ENCODE measurements at regions of chr10 and their contacts with region 1.

Region 1: GRCh38 chr10:106711313-106711906 is 453.1 kb downstream of the SORCS1 start:
- DNase-seq: peak; percentile 46
- H3K4me3 ChIP-seq: no peak overlapping the region
- H3K27ac ChIP-seq: peak overlapping the region in 1 of 2 experiments; percentile 34; a peak in 1 of 4 replicates
- H3K4me1 ChIP-seq: peaks cover 0 to 23% of the 10 kb centered on the region in 2 experiments; a peak in 2 of 4 replicates
- H3K27me3 ChIP-seq: no peaks in the 10 kb centered on the region
- CTCF ChIP-seq: peak; percentile 72
- EP300 ChIP-seq: no peak
- RAD21 ChIP-seq: peak; percentile 73

Region 2: DNA sequence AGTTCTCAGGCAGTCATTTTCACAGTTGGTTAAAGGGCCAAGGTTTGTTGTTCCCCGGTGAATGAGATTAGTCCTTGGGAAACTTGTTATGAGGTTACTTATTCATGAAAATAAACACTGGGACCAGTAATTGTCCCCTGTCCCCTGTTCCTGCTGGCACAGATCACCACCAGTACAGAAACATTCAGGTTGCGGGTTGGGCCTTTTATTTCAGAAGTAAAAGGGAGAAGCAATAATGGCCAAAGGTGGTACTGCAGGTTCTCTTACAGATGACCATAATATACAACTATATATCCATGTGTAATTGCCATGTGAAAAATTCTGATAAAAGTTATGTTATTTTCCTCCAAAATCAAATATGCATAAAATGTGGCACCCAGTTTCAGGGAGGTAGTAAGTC is 11.1 kb after region 1 on chr10:
- CTCF ChIA-PET with region 1: interaction called, 10 read pairs
- POLR2A ChIA-PET with region 1: no interaction called
- DNase-seq: no peak
- H3K4me3 ChIP-seq: no peak overlapping the region
- H3K27ac ChIP-seq: no peak overlapping the region
- H3K4me1 ChIP-seq: peaks cover 0 to 3% of the 10 kb centered on the region in 2 experiments; a peak in 1 of 4 replicates
- H3K27me3 ChIP-seq: no peaks in the 10 kb centered on the region
- CTCF ChIP-seq: no peak; the same call in 1 of the 2 replicates
- EP300 ChIP-seq: no peak
- RAD21 ChIP-seq: no peak

Region 3: DNA sequence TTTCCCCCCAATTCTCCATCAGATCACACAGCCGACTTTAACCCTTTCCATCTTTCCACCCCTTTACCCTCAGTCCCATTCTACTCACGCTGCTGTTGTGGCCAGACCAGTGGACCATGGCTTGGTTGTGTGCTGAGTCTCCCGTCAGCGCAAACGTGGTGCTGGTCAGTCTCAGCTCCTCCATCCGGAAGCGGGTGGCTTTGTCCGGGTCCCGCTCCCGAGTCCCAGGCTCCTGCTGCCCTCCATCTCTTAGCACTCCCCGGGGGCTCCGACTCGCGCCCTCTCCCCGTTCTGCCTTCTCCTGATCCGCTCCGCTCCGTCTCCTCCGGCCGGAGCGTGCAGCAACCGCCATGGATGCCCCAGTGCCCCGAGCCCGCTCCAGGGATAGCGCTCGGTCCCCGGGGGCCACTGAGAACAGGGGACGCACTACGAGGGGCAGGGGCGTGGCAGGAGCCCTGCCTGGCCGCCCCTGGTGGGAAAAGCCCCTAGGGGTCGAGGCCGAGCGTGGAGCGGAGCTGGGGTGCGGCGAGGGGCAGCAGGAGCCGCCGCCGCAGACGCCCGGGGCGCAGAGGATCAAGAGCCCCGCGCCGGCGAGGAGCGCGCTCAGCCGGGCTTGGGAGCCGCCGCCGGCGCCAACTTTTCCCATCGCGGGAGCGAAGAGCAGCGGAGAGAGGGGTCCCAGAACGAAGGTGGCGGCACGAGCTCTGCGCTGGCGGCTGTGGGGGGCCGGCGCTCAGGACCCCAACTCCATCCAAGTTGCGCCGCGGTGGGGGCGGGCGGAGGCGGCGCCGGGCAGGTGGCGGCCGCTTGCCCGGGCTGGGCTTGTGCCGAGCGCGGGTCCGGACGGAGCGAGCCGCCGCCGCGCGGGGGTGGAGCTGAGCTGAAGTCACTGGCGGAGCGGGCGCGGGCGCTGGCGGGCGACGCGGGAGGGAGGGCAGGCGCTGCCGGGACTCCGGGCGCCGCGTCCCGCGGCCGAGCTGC is 452.8 kb after region 1 on chr10 and contains the start of gene SORCS1:
- CTCF ChIA-PET with region 1: interaction called, 13 read pairs
- POLR2A ChIA-PET with region 1: interaction called, 11 read pairs
- DNase-seq: peak; percentile 88
- H3K4me3 ChIP-seq: peak within 1 kb of the TSS; percentile 9 to 61; a peak in 3 of 4 replicates
- H3K27ac ChIP-seq: peak within 1 kb of the TSS in 1 of 2 experiments; percentile 93; a peak in 2 of 4 replicates
- H3K4me1 ChIP-seq: peaks cover 0 to 8% of the 10 kb centered on the region in 2 experiments; a peak in 2 of 4 replicates
- H3K27me3 ChIP-seq: peaks cover 10% of the 10 kb centered on the region; the same call in 1 of the 2 replicates
- CTCF ChIP-seq: no peak
- EP300 ChIP-seq: no peak
- RAD21 ChIP-seq: no peak
- polyA plus RNA-seq, gene SORCS1: 0.66 and 2.4 TPM in 2 replicates